CD8-positive, alpha-beta T cell (primary cell): ENCODE measurements at regions of chr4 and their contacts with region 1.

Region 1: DNA sequence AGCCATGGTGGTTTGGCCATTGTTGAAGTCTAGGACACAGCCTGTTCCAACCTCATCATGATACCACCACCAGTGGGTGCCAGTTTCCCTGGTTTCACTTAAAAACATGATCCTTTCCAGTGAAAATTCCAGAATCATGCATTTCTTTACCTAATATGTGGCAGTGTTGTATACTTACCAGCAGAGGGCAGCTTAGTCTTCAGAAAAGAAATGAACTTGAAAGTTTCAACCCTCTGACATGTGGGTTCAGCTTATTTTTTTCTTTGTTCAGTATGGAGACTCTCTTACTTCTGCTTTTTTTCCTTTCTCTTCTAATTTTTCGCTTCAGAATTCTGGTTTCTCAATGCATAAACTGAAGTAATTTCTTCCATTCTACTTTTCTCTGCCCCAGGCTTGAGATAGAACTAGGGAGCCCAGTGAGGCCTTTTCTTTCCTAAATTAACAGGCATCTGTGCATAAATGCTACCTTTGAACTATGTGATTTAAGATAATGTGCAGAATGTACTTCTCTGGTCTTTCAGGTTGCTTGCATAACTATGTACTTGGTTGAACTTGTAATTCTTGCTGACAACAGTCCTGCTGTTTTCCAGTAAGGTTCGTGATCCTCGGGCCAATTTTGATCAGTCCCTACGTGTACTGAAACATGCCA is 10.7 kb downstream of the LIAS start:
- DNase-seq: peak in 2 of 9 experiments; percentile 55 to 72
- ATAC-seq: peak; percentile 93
- H3K4me3 ChIP-seq: no peak overlapping the region
- H3K4me3 Mint-ChIP-seq: no peak overlapping the region
- H3K27ac ChIP-seq: no peak overlapping the region
- H3K27ac Mint-ChIP-seq: no peak overlapping the region
- H3K4me1 ChIP-seq: no peaks in the 10 kb centered on the region
- H3K4me1 Mint-ChIP-seq: peaks cover 4% of the 10 kb centered on the region
- H3K27me3 ChIP-seq: no peaks in the 10 kb centered on the region
- H3K27me3 Mint-ChIP-seq: no peaks in the 10 kb centered on the region
- CTCF ChIP-seq: peak; percentile 82

Region 2: GRCh38 chr4:38612646-38613414 is 856.7 kb before region 1 on chr4:
- CTCF ChIA-PET with region 1: no interaction called
- POLR2A ChIA-PET with region 1: no interaction called
- intact Hi-C with region 1: no loop called
- DNase-seq: no peak
- ATAC-seq: no peak
- H3K4me3 ChIP-seq: no peak overlapping the region
- H3K4me3 Mint-ChIP-seq: no peak overlapping the region
- H3K27ac ChIP-seq: no peak overlapping the region
- H3K27ac Mint-ChIP-seq: no peak overlapping the region
- H3K4me1 ChIP-seq: peaks cover 13% of the 10 kb centered on the region
- H3K4me1 Mint-ChIP-seq: peaks cover 27% of the 10 kb centered on the region
- H3K27me3 ChIP-seq: no peaks in the 10 kb centered on the region
- H3K27me3 Mint-ChIP-seq: no peaks in the 10 kb centered on the region
- CTCF ChIP-seq: no peak

Region 3: DNA sequence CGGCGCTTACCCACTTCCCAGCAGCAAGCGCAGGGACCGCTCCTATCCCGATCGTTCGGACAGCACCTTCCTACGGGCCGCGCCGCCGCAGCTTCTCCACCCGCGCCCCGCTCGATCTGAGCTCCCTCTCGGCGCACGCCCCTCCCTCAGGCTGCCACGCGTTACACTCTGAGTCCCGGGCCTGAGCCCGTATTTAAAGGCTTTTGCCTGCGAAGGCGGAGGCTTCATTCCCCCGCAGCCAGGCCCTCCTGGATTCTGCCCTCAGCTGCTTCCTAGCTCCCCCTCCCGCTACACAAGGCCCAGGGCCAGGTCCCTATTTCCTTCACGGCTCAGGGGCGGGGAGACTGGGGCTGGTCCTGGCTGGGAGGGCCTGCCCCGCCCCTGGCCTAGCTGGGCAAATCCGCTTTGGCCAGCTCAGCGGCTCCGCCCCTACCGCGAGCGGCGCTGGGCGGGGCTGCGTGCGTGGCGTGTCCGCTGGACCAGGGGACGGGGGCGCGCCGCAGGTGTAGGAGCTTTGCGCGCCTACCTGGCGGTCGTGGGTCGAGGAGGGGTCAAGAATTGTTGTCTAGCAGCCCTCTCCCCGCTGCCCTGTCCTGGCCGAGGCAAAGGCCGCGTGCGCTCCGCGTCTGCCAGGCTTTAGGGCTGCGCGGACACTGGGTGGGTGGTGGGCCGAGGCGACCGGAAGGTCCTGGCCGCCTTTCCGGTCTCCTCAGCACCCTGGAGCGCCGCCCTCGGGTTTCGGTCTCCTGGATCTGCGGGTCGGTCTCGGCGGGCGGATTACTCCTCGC is 57.9 kb after region 1 on chr4 and contains the start of gene UGDH:
- CTCF ChIA-PET with region 1: no interaction called
- POLR2A ChIA-PET with region 1: no interaction called
- intact Hi-C with region 1: loop called (anchors 2 to 5 kb)
- DNase-seq: peak; percentile 81 to 96 (median 90)
- ATAC-seq: peak; percentile 98
- H3K4me3 ChIP-seq: peak within 1 kb of the TSS; percentile 87 to 89
- H3K4me3 Mint-ChIP-seq: peak within 1 kb of the TSS; percentile 96
- H3K27ac ChIP-seq: peak within 1 kb of the TSS; percentile 68 to 74
- H3K27ac Mint-ChIP-seq: peak within 1 kb of the TSS; percentile 93
- H3K4me1 ChIP-seq: peaks cover 17% of the 10 kb centered on the region
- H3K4me1 Mint-ChIP-seq: peaks cover 24% of the 10 kb centered on the region
- H3K27me3 ChIP-seq: no peaks in the 10 kb centered on the region
- H3K27me3 Mint-ChIP-seq: no peaks in the 10 kb centered on the region
- CTCF ChIP-seq: no peak
- total RNA-seq, gene UGDH: 2.6 to 3.6 TPM

Region 4: GRCh38 chr4:39658756-39659155 is 189.2 kb after region 1 on chr4:
- CTCF ChIA-PET with region 1: interaction called, 5 read pairs
- POLR2A ChIA-PET with region 1: no interaction called
- intact Hi-C with region 1: loop called (anchors 1 kb)
- DNase-seq: no peak
- ATAC-seq: no peak
- H3K4me3 ChIP-seq: no peak overlapping the region
- H3K4me3 Mint-ChIP-seq: no peak overlapping the region
- H3K27ac ChIP-seq: no peak overlapping the region
- H3K27ac Mint-ChIP-seq: no peak overlapping the region
- H3K4me1 ChIP-seq: no peaks in the 10 kb centered on the region
- H3K4me1 Mint-ChIP-seq: no peaks in the 10 kb centered on the region
- H3K27me3 ChIP-seq: no peaks in the 10 kb centered on the region
- H3K27me3 Mint-ChIP-seq: no peaks in the 10 kb centered on the region
- CTCF ChIP-seq: no peak